PC-3 (cell line): ENCODE measurements at regions of chr6 and their contacts with region 1.

Region 1: GRCh38 chr6:18314317-18314997 is 50.1 kb upstream of the DEK start:
- DNase-seq: no peak
- ATAC-seq: peak; percentile 91
- H3K4me3 ChIP-seq: no peak overlapping the region
- H3K27ac ChIP-seq: peak overlapping the region; percentile 48
- H3K4me1 ChIP-seq: no peaks in the 10 kb centered on the region
- H3K27me3 ChIP-seq: no peaks in the 10 kb centered on the region
- CTCF ChIP-seq: no peak

Region 2: DNA sequence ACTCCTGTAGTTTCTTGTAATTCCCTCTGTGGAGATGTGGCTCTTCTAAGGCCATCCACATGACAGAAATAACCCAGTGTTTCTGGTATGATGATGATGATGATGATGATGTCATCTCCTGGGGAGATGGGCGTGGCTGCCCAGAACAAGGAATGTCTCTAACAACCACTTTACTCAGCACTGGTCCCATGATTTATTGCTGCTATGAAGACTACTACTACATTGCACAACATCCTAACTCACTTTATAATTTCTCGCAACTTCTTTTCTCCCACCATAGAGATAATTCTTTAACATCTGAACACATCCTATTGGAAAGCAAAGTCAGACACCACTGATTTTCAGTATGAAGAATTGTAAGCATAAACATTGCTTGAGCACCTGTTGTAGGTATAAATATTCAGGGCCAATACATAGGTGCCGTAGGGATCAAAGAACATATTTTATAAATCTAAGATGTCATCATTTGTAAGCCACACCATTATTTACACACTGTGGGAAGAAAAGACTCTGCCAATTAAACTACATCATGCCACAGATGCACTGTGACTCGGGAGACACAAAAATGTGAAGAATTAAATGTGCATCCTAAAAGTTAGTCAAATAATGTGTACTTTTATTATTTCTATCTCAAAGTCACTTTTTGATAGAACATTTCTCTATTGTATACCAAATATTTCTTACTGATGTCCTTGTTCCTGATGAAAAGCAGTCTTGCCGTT is 166.0 kb before region 1 on chr6:
- CTCF ChIA-PET with region 1: no interaction called
- POLR2A ChIA-PET with region 1: no interaction called
- intact Hi-C with region 1: loop called (anchors 5 kb)
- DNase-seq: peak; percentile 89
- ATAC-seq: peak; percentile 27
- H3K4me3 ChIP-seq: no peak overlapping the region
- H3K27ac ChIP-seq: peak overlapping the region; percentile 97
- H3K4me1 ChIP-seq: peaks cover 39% of the 10 kb centered on the region
- H3K27me3 ChIP-seq: no peaks in the 10 kb centered on the region
- CTCF ChIP-seq: no peak